IMR-90 (cell line): ENCODE measurements at regions of chr10 and their contacts with region 1.

Region 1: GRCh38 chr10:68924593-68924992 is 23.5 kb downstream of the DDX50 start:
- DNase-seq: no peak
- ATAC-seq: no peak
- H3K4me3 ChIP-seq: no peak overlapping the region
- H3K27ac ChIP-seq: no peak overlapping the region
- H3K4me1 ChIP-seq: no peaks in the 10 kb centered on the region
- H3K27me3 ChIP-seq: no peaks in the 10 kb centered on the region
- CTCF ChIP-seq: no peak
- POLR2A ChIP-seq: no peak
- RAD21 ChIP-seq: no peak

Region 2: DNA sequence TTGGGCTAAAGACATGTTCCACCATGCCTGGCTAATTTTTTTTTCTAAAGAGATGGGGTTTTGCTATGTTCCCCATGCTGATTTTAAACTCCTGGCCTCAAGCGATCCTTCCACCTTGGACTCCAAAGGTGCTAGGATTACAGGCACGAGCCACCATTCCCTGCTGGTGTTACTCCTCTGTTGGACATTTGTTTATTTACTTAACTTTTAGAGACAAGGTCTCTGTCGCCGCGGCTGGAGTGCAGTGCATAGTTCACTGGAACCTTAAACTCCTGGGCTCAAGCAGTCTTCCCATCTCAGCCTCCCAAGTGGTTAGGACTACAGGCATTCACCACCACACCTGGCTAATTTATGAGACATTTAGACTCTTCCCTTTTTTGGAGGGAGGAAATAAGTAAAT is 164.6 kb before region 1 on chr10:
- CTCF ChIA-PET with region 1: no interaction called
- POLR2A ChIA-PET with region 1: no interaction called
- dilution Hi-C with region 1: loop called (anchors 25 kb)
- in situ Hi-C with region 1: loop called (anchors 10 kb)
- intact Hi-C with region 1: no loop called
- DNase-seq: no peak
- ATAC-seq: no peak
- H3K4me3 ChIP-seq: no peak overlapping the region
- H3K27ac ChIP-seq: no peak overlapping the region; the same call in 1 of the 2 replicates
- H3K4me1 ChIP-seq: no peaks in the 10 kb centered on the region
- H3K27me3 ChIP-seq: no peaks in the 10 kb centered on the region
- CTCF ChIP-seq: no peak
- POLR2A ChIP-seq: no peak
- RAD21 ChIP-seq: no peak

Region 3: DNA sequence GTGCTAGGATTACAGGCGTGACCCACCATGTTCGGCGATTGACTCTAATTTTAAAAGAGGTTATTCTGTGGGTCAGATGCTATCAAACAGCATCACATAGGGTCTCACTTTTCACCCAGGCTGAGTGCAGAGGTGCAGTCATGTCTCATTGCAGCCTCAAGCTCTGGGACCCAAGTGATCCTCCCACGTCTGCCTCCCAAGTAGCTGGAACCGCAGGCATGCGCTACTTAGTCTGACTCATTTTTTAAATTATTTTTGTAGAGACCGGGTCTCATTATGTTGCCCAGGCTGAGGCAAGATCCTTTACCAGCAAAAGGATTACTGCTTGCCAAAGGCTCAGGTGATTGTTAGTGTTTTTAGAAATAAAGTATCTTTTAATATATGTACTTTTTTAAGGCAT is 140.1 kb before region 1 on chr10:
- CTCF ChIA-PET with region 1: no interaction called
- POLR2A ChIA-PET with region 1: no interaction called
- dilution Hi-C with region 1: no loop called
- in situ Hi-C with region 1: no loop called
- intact Hi-C with region 1: no loop called
- DNase-seq: peak; percentile 8
- ATAC-seq: no peak; the same call in 1 of the 2 replicates
- H3K4me3 ChIP-seq: no peak overlapping the region
- H3K27ac ChIP-seq: no peak overlapping the region
- H3K4me1 ChIP-seq: no peaks in the 10 kb centered on the region
- H3K27me3 ChIP-seq: no peaks in the 10 kb centered on the region
- CTCF ChIP-seq: no peak
- POLR2A ChIP-seq: no peak
- RAD21 ChIP-seq: no peak

Region 4: DNA sequence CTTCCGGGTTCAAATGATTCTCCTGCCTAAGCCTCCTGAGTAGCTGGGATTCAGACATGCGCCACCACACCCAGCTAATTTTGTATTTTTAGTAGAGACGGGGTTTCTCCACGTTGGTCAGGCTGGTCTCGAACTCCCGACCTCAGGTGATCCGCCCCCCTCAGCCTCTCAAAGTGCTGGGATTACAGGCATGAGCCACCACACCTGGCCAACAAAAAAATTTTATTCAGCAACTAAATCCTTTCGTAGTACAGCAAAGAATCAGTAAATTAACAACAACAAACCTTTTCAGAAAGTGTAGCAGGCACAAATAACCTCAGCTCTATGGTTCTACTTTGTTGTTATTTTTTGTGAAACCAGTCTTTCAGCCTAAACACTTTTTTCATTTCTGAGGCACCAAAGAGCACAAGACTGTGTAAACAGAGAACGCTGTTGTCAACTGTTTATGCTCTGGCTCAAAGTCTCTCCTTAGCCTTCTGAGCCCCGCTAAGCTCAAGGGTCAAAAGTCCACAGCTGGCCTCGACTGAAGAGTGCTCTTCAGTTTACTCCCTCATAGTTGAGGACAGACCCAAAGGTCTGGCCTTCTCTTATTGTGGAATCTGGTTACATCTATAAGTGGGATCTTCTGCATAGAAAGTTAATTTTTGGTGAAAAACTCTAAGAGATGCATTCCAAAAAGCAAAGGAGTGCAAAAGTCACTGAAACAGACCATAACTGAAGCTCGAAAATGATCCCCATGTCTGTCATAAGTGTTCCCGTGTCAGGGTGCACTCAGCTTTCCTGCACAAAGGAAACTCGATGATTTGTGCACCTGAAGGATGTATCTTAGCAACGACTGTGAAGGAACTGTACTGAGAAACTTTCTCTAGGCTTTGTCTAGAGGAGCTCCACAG is 48.1 kb before region 1 on chr10:
- CTCF ChIA-PET with region 1: no interaction called
- POLR2A ChIA-PET with region 1: no interaction called
- dilution Hi-C with region 1: no loop called
- in situ Hi-C with region 1: no loop called
- intact Hi-C with region 1: no loop called
- DNase-seq: peak; percentile 10
- ATAC-seq: peak; percentile 79
- H3K4me3 ChIP-seq: no peak overlapping the region
- H3K27ac ChIP-seq: no peak overlapping the region
- H3K4me1 ChIP-seq: peaks cover 1% of the 10 kb centered on the region
- H3K27me3 ChIP-seq: peaks cover 11% of the 10 kb centered on the region
- CTCF ChIP-seq: no peak
- POLR2A ChIP-seq: no peak
- RAD21 ChIP-seq: no peak